ENCODE measurements at regions of chr19 and their contacts with region 1.

Region 1: GRCh38 chr19:13162518-13163314 is 12.5 kb downstream of the IER2 start:
- DNase-seq: peak; percentile 90
- H3K4me3 ChIP-seq: peak overlapping the region; percentile 25 to 58
- H3K27ac ChIP-seq: peak overlapping the region; percentile 97 to 100
- H3K4me1 ChIP-seq: peaks cover 28 to 31% of the 10 kb centered on the region in 2 experiments; a peak in 3 of 4 replicates
- H3K27me3 ChIP-seq: no peaks in the 10 kb centered on the region
- CTCF ChIP-seq: no peak
- EP300 ChIP-seq: no peak
- RAD21 ChIP-seq: no peak

Region 2: GRCh38 chr19:13115936-13116281 is 46.8 kb before region 1 on chr19:
- CTCF ChIA-PET with region 1: no interaction called
- POLR2A ChIA-PET with region 1: no interaction called
- DNase-seq: no peak
- H3K4me3 ChIP-seq: peak overlapping the region; percentile 94 to 97
- H3K27ac ChIP-seq: peak overlapping the region in 1 of 2 experiments; percentile 65; a peak in 2 of 4 replicates
- H3K4me1 ChIP-seq: peaks cover 22 to 27% of the 10 kb centered on the region in 2 experiments; a peak in 2 of 4 replicates
- H3K27me3 ChIP-seq: no peaks in the 10 kb centered on the region
- CTCF ChIP-seq: no peak
- EP300 ChIP-seq: no peak
- RAD21 ChIP-seq: no peak

Region 3: GRCh38 chr19:13150187-13150930 is 12.4 kb before region 1 on chr19 and contains the starts of genes IER2 and STX10:
- CTCF ChIA-PET with region 1: interaction called, 11 read pairs
- POLR2A ChIA-PET with region 1: interaction called, 73 read pairs
- DNase-seq: peak; percentile 92
- H3K4me3 ChIP-seq: peak within 1 kb of the TSS; percentile 83 to 94
- H3K27ac ChIP-seq: peak within 1 kb of the TSS; percentile 95 to 99
- H3K4me1 ChIP-seq: peaks cover 0 to 12% of the 10 kb centered on the region in 2 experiments; a peak in 1 of 4 replicates
- H3K27me3 ChIP-seq: no peaks in the 10 kb centered on the region
- CTCF ChIP-seq: peak; percentile 53
- EP300 ChIP-seq: no peak
- RAD21 ChIP-seq: peak; percentile 53
- polyA plus RNA-seq, gene IER2: 55.7 and 115 TPM in 2 replicates
- polyA plus RNA-seq, gene STX10: 143 and 163 TPM in 2 replicates